ENCODE measurements at regions of chr1 and their contacts with region 1.

Region 1: DNA sequence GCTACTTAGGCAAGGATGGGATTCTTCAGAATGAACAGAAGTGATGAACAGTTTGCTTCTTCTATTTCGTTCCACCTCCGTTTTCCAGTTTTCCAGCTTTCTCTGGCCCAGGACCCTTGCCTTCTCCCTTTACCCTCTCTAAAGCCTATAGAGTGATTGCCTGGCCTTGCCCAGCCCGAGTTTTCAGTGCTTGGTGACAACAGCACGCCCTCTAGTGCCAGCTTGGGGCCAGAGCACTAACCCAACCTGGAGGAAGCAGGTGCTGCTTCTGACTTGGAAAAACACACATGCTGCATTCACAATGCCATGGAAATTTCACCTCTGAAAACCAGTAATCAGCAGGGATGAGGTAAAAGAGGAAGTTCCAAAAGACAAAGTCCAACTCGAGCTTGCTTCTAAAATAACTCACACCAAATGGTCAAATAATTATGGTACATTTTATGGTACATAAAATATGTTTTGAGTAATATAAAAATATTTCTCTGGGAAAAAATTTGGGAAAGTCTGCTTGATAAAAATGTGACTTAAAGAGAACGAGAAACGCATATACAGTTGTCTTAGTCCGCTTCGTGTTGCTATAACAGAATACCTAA is 26.1 kb downstream of the UBE2T start:
- DNase-seq: peak; percentile 74
- H3K4me3 ChIP-seq: no peak overlapping the region
- H3K27ac ChIP-seq: no peak overlapping the region
- H3K4me1 ChIP-seq: peaks cover 12% of the 10 kb centered on the region
- H3K27me3 ChIP-seq: no peaks in the 10 kb centered on the region
- CTCF ChIP-seq: peak; percentile 98

Region 2: GRCh38 chr1:202105539-202106276 is 210.0 kb before region 1 on chr1:
- CTCF ChIA-PET with region 1: no interaction called
- POLR2A ChIA-PET with region 1: no interaction called
- intact Hi-C with region 1: no loop called
- DNase-seq: peak; percentile 50
- H3K4me3 ChIP-seq: no peak overlapping the region
- H3K27ac ChIP-seq: no peak overlapping the region
- H3K4me1 ChIP-seq: peaks cover 8% of the 10 kb centered on the region
- H3K27me3 ChIP-seq: no peaks in the 10 kb centered on the region
- CTCF ChIP-seq: no peak

Region 3: GRCh38 chr1:202184750-202185460 is 130.8 kb before region 1 on chr1:
- CTCF ChIA-PET with region 1: interaction called, 13 read pairs
- POLR2A ChIA-PET with region 1: interaction called, 5 read pairs
- intact Hi-C with region 1: loop called (anchors 2 kb)
- DNase-seq: peak; percentile 92
- H3K4me3 ChIP-seq: no peak overlapping the region
- H3K27ac ChIP-seq: no peak overlapping the region
- H3K4me1 ChIP-seq: no peaks in the 10 kb centered on the region
- H3K27me3 ChIP-seq: peaks cover 2% of the 10 kb centered on the region
- CTCF ChIP-seq: peak; percentile 92

Region 4: GRCh38 chr1:202192770-202193613 is 122.7 kb before region 1 on chr1:
- CTCF ChIA-PET with region 1: interaction called, 13 read pairs
- POLR2A ChIA-PET with region 1: no interaction called
- intact Hi-C with region 1: loop called (anchors 2 kb)
- DNase-seq: peak; percentile 59
- H3K4me3 ChIP-seq: no peak overlapping the region
- H3K27ac ChIP-seq: no peak overlapping the region
- H3K4me1 ChIP-seq: no peaks in the 10 kb centered on the region
- H3K27me3 ChIP-seq: peaks cover 39% of the 10 kb centered on the region
- CTCF ChIP-seq: peak; percentile 90

Region 5: GRCh38 chr1:202274611-202275010 is 41.1 kb before region 1 on chr1:
- CTCF ChIA-PET with region 1: no interaction called
- POLR2A ChIA-PET with region 1: no interaction called
- intact Hi-C with region 1: loop called (anchors 2 kb)
- DNase-seq: peak; percentile 61
- H3K4me3 ChIP-seq: no peak overlapping the region
- H3K27ac ChIP-seq: no peak overlapping the region
- H3K4me1 ChIP-seq: no peaks in the 10 kb centered on the region
- H3K27me3 ChIP-seq: no peaks in the 10 kb centered on the region
- CTCF ChIP-seq: peak; percentile 62

Region 6: DNA sequence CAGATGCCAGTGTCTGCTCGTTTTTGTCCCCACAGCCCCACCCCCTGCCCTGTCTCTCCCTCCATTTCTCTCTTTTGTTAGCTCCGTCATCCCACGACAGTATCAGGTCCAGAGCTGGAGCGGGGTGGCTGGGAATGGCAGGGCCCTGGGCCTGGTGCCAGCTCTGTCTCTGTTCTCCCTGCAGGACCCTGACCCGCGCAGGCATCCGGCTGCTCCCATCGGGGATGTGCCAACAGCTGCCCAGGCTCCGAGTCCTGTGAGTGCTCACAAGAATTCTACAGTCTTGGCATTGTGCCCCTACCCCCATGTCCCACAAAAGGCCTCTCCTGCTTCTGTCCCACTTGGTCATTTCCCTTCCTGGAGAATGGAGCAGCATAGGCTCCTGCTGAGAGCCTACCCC is 11.3 kb before region 1 on chr1:
- CTCF ChIA-PET with region 1: no interaction called
- POLR2A ChIA-PET with region 1: no interaction called
- intact Hi-C with region 1: no loop called
- DNase-seq: no peak
- H3K4me3 ChIP-seq: no peak overlapping the region
- H3K27ac ChIP-seq: no peak overlapping the region
- H3K4me1 ChIP-seq: no peaks in the 10 kb centered on the region
- H3K27me3 ChIP-seq: no peaks in the 10 kb centered on the region
- CTCF ChIP-seq: no peak

Region 7: GRCh38 chr1:202888531-202889360 is 573.1 kb after region 1 on chr1 and contains the start of gene RABIF:
- CTCF ChIA-PET with region 1: no interaction called
- POLR2A ChIA-PET with region 1: no interaction called
- intact Hi-C with region 1: no loop called
- DNase-seq: peak; percentile 98
- H3K4me3 ChIP-seq: peak within 1 kb of the TSS; percentile 73
- H3K27ac ChIP-seq: peak within 1 kb of the TSS; percentile 84
- H3K4me1 ChIP-seq: no peaks in the 10 kb centered on the region
- H3K27me3 ChIP-seq: no peaks in the 10 kb centered on the region
- CTCF ChIP-seq: 0 out of 2 replicates have a peak, but pooled peaks have one; percentile 18
- total RNA-seq, gene RABIF: 11.1 and 12.2 TPM in 2 replicates

Measured in A673 (cell line).